ENCODE measurements at regions of chr17 and their contacts with region 1.

Region 1: GRCh38 chr17:38853292-38854219 is at the start of gene RPL23:
- DNase-seq: peak; percentile 78 to 98 (median 91)
- ATAC-seq: peak; percentile 78
- H3K4me3 ChIP-seq: peak within 1 kb of the TSS; percentile 56 to 74
- H3K4me3 Mint-ChIP-seq: peak within 1 kb of the TSS; percentile 93
- H3K27ac ChIP-seq: peak within 1 kb of the TSS; percentile 84 to 94
- H3K27ac Mint-ChIP-seq: peak within 1 kb of the TSS; percentile 99
- H3K4me1 ChIP-seq: peaks cover 22% of the 10 kb centered on the region
- H3K4me1 Mint-ChIP-seq: peaks cover 46% of the 10 kb centered on the region
- H3K27me3 ChIP-seq: no peaks in the 10 kb centered on the region
- H3K27me3 Mint-ChIP-seq: no peaks in the 10 kb centered on the region
- CTCF ChIP-seq: no peak
- total RNA-seq, gene RPL23: 2,036 to 2,052 TPM

Region 2: GRCh38 chr17:38693700-38694329 is 159.7 kb before region 1 on chr17:
- CTCF ChIA-PET with region 1: no interaction called
- POLR2A ChIA-PET with region 1: no interaction called
- intact Hi-C with region 1: no loop called
- DNase-seq: no peak
- ATAC-seq: no peak
- H3K4me3 ChIP-seq: no peak overlapping the region
- H3K4me3 Mint-ChIP-seq: no peak overlapping the region
- H3K27ac ChIP-seq: no peak overlapping the region
- H3K27ac Mint-ChIP-seq: no peak overlapping the region
- H3K4me1 ChIP-seq: peaks cover 15% of the 10 kb centered on the region
- H3K4me1 Mint-ChIP-seq: peaks cover 20% of the 10 kb centered on the region
- H3K27me3 ChIP-seq: no peaks in the 10 kb centered on the region
- H3K27me3 Mint-ChIP-seq: no peaks in the 10 kb centered on the region
- CTCF ChIP-seq: no peak

Region 3: GRCh38 chr17:38799378-38800236 is 53.9 kb before region 1 on chr17 and contains the start of gene PIP4K2B:
- CTCF ChIA-PET with region 1: no interaction called
- POLR2A ChIA-PET with region 1: no interaction called
- intact Hi-C with region 1: loop called in 1 of 2 experiments (anchors 1 kb)
- DNase-seq: peak; percentile 58 to 93 (median 82)
- ATAC-seq: peak; percentile 76
- H3K4me3 ChIP-seq: peak within 1 kb of the TSS; percentile 88 to 95
- H3K4me3 Mint-ChIP-seq: peak within 1 kb of the TSS; percentile 91
- H3K27ac ChIP-seq: peak within 1 kb of the TSS; percentile 54 to 86
- H3K27ac Mint-ChIP-seq: peak within 1 kb of the TSS; percentile 90
- H3K4me1 ChIP-seq: peaks cover 31% of the 10 kb centered on the region
- H3K4me1 Mint-ChIP-seq: peaks cover 40% of the 10 kb centered on the region
- H3K27me3 ChIP-seq: no peaks in the 10 kb centered on the region
- H3K27me3 Mint-ChIP-seq: no peaks in the 10 kb centered on the region
- CTCF ChIP-seq: no peak
- total RNA-seq, gene PIP4K2B: 9.9 to 13.0 TPM

Region 4: DNA sequence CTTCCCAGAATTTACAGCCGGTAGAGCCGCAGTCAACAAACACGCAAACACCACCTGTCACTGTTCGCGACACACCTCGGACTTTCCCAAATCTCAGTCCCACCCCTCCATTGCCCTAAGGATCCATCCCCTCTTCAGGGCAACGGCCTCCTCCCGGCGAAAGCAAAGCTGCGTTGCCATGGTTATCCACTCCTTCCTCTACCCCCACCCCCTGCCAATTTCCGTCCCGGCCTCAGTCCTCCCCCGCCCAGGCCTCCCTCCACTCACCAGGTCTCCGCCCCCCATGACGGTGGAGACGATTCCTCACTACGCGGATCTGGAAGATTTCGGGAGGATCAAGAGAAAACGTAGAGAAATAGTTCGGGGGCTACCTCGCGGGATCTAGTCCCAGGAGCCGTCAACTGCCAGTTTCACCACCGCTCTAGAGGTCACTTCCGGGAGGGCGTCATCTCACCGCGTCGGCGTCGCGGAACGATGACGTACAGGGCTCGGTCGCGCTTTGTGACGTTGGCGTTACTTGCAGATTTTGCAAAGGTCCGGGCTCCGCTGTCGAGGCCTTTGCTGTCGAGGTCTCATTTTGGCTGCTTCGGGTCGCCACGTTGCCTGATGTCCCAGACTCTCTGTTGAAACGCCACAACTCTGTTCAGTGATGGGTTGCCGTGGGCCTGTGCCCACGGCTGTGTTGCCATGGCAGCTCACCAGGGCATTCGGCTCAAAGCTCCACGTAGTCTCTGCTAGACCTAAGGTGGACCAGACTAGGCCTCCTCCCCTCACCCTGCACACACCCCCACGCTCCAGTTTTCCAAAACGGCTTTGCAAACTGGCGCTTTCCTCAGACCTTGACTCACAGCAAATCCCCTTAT is 28.4 kb before region 1 on chr17 and contains the start of gene CWC25:
- CTCF ChIA-PET with region 1: interaction called, 4 read pairs
- POLR2A ChIA-PET with region 1: interaction called, 18 read pairs
- intact Hi-C with region 1: loop called (anchors 1 kb)
- DNase-seq: peak; percentile 92 to 100 (median 97)
- ATAC-seq: peak; percentile 80
- H3K4me3 ChIP-seq: peak within 1 kb of the TSS; percentile 65 to 88
- H3K4me3 Mint-ChIP-seq: peak within 1 kb of the TSS; percentile 99
- H3K27ac ChIP-seq: peak within 1 kb of the TSS; percentile 97 to 98
- H3K27ac Mint-ChIP-seq: peak within 1 kb of the TSS; percentile 100
- H3K4me1 ChIP-seq: peaks cover 23% of the 10 kb centered on the region
- H3K4me1 Mint-ChIP-seq: peaks cover 35% of the 10 kb centered on the region
- H3K27me3 ChIP-seq: no peaks in the 10 kb centered on the region
- H3K27me3 Mint-ChIP-seq: no peaks in the 10 kb centered on the region
- CTCF ChIP-seq: no peak
- total RNA-seq, gene CWC25: 80.3 to 87.5 TPM

Region 5: GRCh38 chr17:38898812-38899348 is 45.3 kb after region 1 on chr17:
- CTCF ChIA-PET with region 1: interaction called, 6 read pairs
- POLR2A ChIA-PET with region 1: interaction called, 9 read pairs
- intact Hi-C with region 1: loop called in 1 of 2 experiments (anchors 2 kb)
- DNase-seq: peak; percentile 59 to 94 (median 88)
- ATAC-seq: peak; percentile 81
- H3K4me3 ChIP-seq: peak overlapping the region; percentile 25 to 49
- H3K4me3 Mint-ChIP-seq: peak overlapping the region; percentile 77
- H3K27ac ChIP-seq: peak overlapping the region; percentile 56 to 94
- H3K27ac Mint-ChIP-seq: peak overlapping the region; percentile 95
- H3K4me1 ChIP-seq: peaks cover 78% of the 10 kb centered on the region
- H3K4me1 Mint-ChIP-seq: peaks cover 73% of the 10 kb centered on the region
- H3K27me3 ChIP-seq: no peaks in the 10 kb centered on the region
- H3K27me3 Mint-ChIP-seq: no peaks in the 10 kb centered on the region
- CTCF ChIP-seq: no peak

Region 6: DNA sequence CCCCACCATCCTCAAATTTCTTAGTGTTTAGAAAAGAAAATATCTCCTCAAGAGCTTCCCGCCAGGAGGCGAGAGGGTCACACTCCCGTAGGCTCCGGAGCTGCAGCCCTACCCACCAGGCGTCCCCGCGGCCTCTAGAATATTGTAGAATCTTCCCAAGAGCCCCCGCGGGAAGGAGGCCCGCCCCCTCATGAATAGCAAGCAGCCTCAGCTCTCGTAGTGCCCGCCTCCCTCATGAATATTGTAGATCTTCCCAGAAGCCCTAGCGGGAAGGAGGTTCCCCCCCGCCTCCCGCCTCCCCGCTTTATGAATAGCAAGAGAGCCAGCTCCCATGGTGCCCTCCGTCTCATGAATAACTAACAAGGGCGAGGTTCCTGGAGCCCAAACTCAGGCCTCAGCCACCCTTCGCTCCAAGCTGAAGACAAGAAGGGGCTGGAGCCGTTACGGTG is 113.8 kb after region 1 on chr17 and contains the start of gene FBXO47:
- CTCF ChIA-PET with region 1: interaction called, 4 read pairs
- POLR2A ChIA-PET with region 1: interaction called, 3 read pairs
- intact Hi-C with region 1: loop called in 1 of 2 experiments (anchors 1 kb)
- DNase-seq: peak; percentile 61 to 93 (median 82)
- ATAC-seq: peak; percentile 98
- H3K4me3 ChIP-seq: peak within 1 kb of the TSS; percentile 18 to 53
- H3K4me3 Mint-ChIP-seq: peak within 1 kb of the TSS; percentile 81
- H3K27ac ChIP-seq: peak within 1 kb of the TSS; percentile 42 to 65
- H3K27ac Mint-ChIP-seq: peak within 1 kb of the TSS; percentile 89
- H3K4me1 ChIP-seq: peaks cover 9% of the 10 kb centered on the region
- H3K4me1 Mint-ChIP-seq: peaks cover 19% of the 10 kb centered on the region
- H3K27me3 ChIP-seq: no peaks in the 10 kb centered on the region
- H3K27me3 Mint-ChIP-seq: no peaks in the 10 kb centered on the region
- CTCF ChIP-seq: no peak
- total RNA-seq, gene FBXO47: not detected